Right cardiac atrium (tissue), 5 donors: ENCODE measurements at regions of chr18 and their contacts with region 1.

Region 1: GRCh38 chr18:22542401-22542835 is 124.7 kb upstream of the CTAGE1 start:
- DNase-seq: peak; percentile 55 to 89 (median 84)
- ATAC-seq: peak; percentile 65 to 83
- H3K4me3 ChIP-seq: no peak overlapping the region
- H3K27ac ChIP-seq: peak overlapping the region; percentile 61
- H3K4me1 ChIP-seq: peaks cover 15% of the 10 kb centered on the region
- H3K27me3 ChIP-seq: no peaks in the 10 kb centered on the region

Region 2: GRCh38 chr18:22471546-22472131 is 70.8 kb before region 1 on chr18:
- intact Hi-C with region 1: loop called in 1 of 4 experiments (anchors 10 kb)
- DNase-seq: peak; percentile 81 to 88 (median 84)
- ATAC-seq: peak; percentile 87 to 92
- H3K4me3 ChIP-seq: no peak overlapping the region
- H3K27ac ChIP-seq: peak overlapping the region; percentile 89
- H3K4me1 ChIP-seq: peaks cover 20% of the 10 kb centered on the region
- H3K27me3 ChIP-seq: no peaks in the 10 kb centered on the region

Region 3: DNA sequence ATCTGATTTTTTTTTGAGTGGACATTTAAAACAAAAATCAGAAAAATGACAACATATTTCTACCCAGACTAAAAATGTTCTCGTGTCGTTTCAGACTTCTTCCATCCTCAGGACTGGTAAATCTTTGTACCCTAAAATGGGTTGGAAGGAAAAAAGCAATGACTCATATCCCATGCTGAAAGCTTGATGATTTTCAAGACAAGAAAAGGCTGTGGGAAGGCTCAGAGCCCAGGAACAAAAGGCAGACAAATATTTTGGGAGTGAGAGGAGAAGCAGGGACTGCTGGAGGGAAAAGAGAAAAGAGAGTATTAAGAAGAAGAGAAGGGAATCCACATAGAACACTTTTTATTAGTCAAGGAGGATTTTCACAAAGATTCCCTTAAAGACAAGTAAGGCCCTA is 47.6 kb before region 1 on chr18:
- intact Hi-C with region 1: loop called in 2 of 4 experiments (anchors 5 to 10 kb)
- DNase-seq: peak in 1 of 3 donors; percentile 43
- ATAC-seq: peak; percentile 74 to 83
- H3K4me3 ChIP-seq: no peak overlapping the region
- H3K27ac ChIP-seq: no peak overlapping the region
- H3K4me1 ChIP-seq: peaks cover 3% of the 10 kb centered on the region
- H3K27me3 ChIP-seq: no peaks in the 10 kb centered on the region